Activated CD8-positive, alpha-beta T cell treated with anti-CD3 and anti-CD28 coated beads, Interleukin-2, amount 10 ng/mL, durations not matched to agents 7 days and 5 days (primary cell): ENCODE measurements at regions of chr19 and their contacts with region 1.

Region 1: DNA sequence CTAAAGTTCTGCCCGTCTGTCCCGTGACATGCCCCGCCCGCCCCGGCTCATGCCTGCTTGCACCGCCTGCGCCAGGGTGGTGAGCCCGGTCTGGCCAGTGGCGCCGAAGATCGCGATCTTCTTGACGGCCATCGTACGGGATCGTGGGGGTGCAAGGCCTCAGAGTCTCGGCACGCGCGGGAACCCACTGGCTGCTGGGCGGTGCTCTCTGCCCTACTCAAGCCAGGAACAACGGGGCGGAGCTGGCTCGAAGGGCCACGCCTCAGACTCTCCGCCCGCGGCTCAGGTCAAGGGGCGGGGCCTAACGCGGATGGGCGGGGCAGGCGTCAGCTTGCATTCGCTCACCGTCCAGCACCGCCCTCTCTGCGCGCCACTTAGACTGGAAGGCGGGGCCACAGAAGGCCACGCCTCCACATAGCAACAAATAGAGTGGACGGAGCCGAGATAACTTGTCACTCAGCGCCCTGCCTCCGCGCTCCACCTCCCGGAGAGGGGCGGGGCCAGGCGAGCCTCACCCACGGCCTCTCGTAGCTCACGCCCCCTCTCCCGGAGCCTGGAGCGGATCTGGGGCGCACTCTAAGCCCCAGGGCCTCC is at the start of gene BLVRB:
- DNase-seq: peak; percentile 99
- ATAC-seq: peak; percentile 88
- H3K4me3 Mint-ChIP-seq: peak within 1 kb of the TSS; percentile 86
- H3K27ac Mint-ChIP-seq: peak within 1 kb of the TSS; percentile 86
- H3K4me1 Mint-ChIP-seq: peaks cover 28% of the 10 kb centered on the region
- H3K27me3 Mint-ChIP-seq: peaks cover 20% of the 10 kb centered on the region
- total RNA-seq, gene BLVRB: 15.1 to 16.5 TPM

Region 2: DNA sequence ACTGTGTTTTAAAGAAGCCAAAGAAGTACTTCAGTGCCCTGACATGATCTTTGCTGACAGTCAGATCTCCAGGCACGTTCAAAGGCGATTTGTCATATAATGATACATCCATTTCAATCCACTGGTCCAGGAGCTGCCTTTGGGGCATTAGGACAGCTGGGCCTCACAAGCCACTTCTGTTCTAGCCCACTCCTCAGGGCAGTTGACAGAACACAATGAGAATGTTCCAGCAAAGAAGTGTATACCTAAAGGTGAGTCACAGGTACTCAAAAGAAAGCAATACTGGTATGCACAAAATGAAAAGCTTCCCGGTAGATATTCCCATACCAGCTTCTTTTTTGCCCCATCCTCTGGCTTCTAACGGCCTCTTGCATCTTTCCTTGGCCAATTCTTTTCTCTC is 286.9 kb before region 1 on chr19:
- CTCF ChIA-PET with region 1: no interaction called
- POLR2A ChIA-PET with region 1: no interaction called
- DNase-seq: no peak
- ATAC-seq: no peak
- H3K4me3 Mint-ChIP-seq: no peak overlapping the region
- H3K27ac Mint-ChIP-seq: no peak overlapping the region
- H3K4me1 Mint-ChIP-seq: no peaks in the 10 kb centered on the region
- H3K27me3 Mint-ChIP-seq: peaks cover 5% of the 10 kb centered on the region

Region 3: GRCh38 chr19:40425450-40426287 is 40.0 kb before region 1 on chr19 and contains the start of gene SERTAD1:
- CTCF ChIA-PET with region 1: interaction called, 38 read pairs
- POLR2A ChIA-PET with region 1: interaction called, 19 read pairs
- DNase-seq: peak; percentile 100
- ATAC-seq: peak; percentile 91
- H3K4me3 Mint-ChIP-seq: peak within 1 kb of the TSS; percentile 81
- H3K27ac Mint-ChIP-seq: peak within 1 kb of the TSS; percentile 90
- H3K4me1 Mint-ChIP-seq: peaks cover 26% of the 10 kb centered on the region
- H3K27me3 Mint-ChIP-seq: no peaks in the 10 kb centered on the region
- total RNA-seq, gene SERTAD1: 9.3 to 10.1 TPM

Region 4: DNA sequence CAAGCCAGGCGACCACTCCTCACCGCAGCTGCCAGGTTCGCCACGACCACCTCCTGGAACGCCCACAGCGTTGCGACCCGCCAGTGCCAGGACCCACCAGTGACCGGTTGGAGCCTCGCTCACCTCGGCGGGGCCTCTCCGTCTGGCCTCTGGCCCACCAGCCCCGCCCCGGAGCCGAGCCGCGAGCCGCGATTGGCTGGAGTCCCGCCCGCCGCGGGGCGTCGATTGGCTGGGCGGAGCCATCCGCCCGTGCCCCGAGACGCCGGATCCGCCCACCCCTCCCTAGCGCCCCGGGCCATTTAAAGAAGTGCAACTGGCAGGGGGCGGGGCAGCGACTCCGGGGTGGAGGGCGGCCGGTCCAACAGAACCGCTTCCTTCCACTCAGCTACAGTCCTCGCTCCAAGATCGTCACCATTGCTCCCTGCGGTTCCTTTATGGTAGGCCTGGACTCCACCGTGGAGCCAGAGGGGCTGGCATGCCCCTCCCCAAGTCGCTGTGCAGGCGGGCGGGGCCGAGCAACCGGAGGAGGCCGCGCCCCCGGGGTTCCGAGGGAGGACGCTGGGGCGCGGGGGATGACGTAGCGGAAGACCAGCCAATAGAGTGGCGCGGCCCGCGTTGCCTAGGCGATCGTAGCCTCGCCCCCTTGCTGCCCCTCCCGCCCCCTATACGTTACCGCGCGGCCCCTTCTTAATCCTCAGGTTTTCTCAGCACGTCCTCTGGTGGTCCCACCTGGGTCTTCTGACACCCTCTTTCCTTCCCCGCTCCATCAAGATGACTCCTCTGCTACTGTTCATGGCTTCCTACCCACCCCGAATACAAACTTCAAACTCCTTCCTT is 21.2 kb before region 1 on chr19 and contains the start of gene SERTAD3:
- CTCF ChIA-PET with region 1: interaction called, 30 read pairs
- POLR2A ChIA-PET with region 1: interaction called, 12 read pairs
- DNase-seq: peak; percentile 98
- ATAC-seq: peak; percentile 78
- H3K4me3 Mint-ChIP-seq: peak within 1 kb of the TSS; percentile 98
- H3K27ac Mint-ChIP-seq: peak within 1 kb of the TSS; percentile 98
- H3K4me1 Mint-ChIP-seq: peaks cover 18% of the 10 kb centered on the region
- H3K27me3 Mint-ChIP-seq: no peaks in the 10 kb centered on the region
- total RNA-seq, gene SERTAD3: 10.0 to 11.9 TPM

Region 5: DNA sequence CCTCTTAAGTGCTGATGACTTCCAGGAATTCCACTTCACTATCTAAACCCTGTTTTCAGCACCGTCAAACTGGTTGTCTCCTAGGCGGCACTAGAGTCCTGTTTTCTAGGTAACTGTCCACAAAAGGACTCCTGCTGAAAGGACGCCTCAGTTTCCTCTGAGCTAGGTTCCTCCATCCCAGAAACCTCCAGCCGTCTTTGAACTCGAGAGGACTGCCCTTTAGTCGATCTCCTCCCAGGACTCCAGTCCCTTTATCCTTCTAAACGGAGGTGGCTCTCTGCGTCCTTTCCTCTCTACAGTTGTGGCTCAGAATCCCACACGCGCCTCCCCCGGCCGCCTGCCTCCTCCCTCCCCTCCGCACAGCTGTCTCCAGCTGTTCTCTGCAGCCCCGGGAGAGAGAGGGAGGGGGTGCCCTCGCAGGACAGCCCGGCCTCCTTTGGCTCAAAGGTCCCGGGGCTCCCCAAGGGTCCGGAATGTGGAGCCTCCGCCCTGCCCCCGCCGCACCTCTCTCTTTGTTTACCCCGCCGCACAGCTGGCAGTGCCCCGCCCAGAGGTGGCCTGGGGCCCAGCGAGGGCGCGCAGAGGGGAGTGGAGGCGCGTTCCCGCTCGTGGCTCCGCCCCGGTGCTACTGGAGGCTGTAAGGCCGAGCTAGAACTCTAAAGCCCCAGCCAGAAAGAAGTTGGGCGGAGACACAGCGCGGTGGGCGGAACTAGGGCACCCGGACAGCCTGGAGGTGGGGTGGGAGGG is 137.9 kb after region 1 on chr19:
- CTCF ChIA-PET with region 1: interaction called, 62 read pairs
- POLR2A ChIA-PET with region 1: no interaction called
- DNase-seq: peak; percentile 99
- ATAC-seq: peak; percentile 79
- H3K4me3 Mint-ChIP-seq: peak overlapping the region; percentile 80
- H3K27ac Mint-ChIP-seq: peak overlapping the region; percentile 92
- H3K4me1 Mint-ChIP-seq: peaks cover 78% of the 10 kb centered on the region
- H3K27me3 Mint-ChIP-seq: peaks cover 33% of the 10 kb centered on the region